ENCODE measurements at regions of chr10 and their contacts with region 1.

Region 1: DNA sequence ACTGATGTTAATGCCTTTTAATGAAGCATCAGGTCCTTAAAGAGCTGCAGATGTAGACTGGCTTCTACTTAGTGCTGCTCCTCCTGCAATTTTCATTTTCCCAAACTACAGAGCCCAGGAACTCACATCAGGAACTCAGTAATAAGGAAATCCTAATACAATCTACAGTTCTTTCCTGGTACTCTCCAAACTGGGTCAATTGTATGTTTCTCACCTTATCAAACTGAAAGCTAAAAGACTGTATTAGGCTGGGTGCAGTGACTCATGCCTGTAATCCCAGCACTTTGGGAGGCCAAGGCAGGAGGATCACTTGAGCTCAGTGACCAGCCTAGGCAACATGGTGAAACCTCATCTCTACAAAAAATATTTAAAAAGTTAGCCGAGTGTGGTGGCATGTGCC is 54.4 kb upstream of the DNAJB12 start:
- DNase-seq: no peak
- ATAC-seq: no peak
- H3K4me3 ChIP-seq: no peak overlapping the region
- H3K27ac ChIP-seq: no peak overlapping the region
- H3K4me1 ChIP-seq: no peaks in the 10 kb centered on the region
- H3K27me3 ChIP-seq: no peaks in the 10 kb centered on the region
- CTCF ChIP-seq: no peak
- POLR2A ChIP-seq: no peak
- RAD21 ChIP-seq: no peak

Region 2: GRCh38 chr10:72107325-72108003 is 301.7 kb before region 1 on chr10:
- CTCF ChIA-PET with region 1: no interaction called
- POLR2A ChIA-PET with region 1: no interaction called
- dilution Hi-C with region 1: no loop called
- in situ Hi-C with region 1: no loop called
- intact Hi-C with region 1: no loop called
- DNase-seq: no peak
- ATAC-seq: peak; percentile 42; the same call in 1 of the 2 replicates
- H3K4me3 ChIP-seq: no peak overlapping the region
- H3K27ac ChIP-seq: no peak overlapping the region
- H3K4me1 ChIP-seq: peaks cover 2% of the 10 kb centered on the region; the same call in 1 of the 2 replicates
- H3K27me3 ChIP-seq: no peaks in the 10 kb centered on the region
- CTCF ChIP-seq: no peak
- POLR2A ChIP-seq: no peak
- RAD21 ChIP-seq: no peak

Region 3: GRCh38 chr10:72386916-72387586 is 22.1 kb before region 1 on chr10:
- CTCF ChIA-PET with region 1: no interaction called
- POLR2A ChIA-PET with region 1: interaction called, 10 read pairs
- dilution Hi-C with region 1: no loop called
- in situ Hi-C with region 1: no loop called
- intact Hi-C with region 1: no loop called
- DNase-seq: no peak
- ATAC-seq: no peak
- H3K4me3 ChIP-seq: no peak overlapping the region
- H3K27ac ChIP-seq: no peak overlapping the region
- H3K4me1 ChIP-seq: no peaks in the 10 kb centered on the region
- H3K27me3 ChIP-seq: no peaks in the 10 kb centered on the region
- CTCF ChIP-seq: no peak
- POLR2A ChIP-seq: no peak
- RAD21 ChIP-seq: no peak

Region 4: DNA sequence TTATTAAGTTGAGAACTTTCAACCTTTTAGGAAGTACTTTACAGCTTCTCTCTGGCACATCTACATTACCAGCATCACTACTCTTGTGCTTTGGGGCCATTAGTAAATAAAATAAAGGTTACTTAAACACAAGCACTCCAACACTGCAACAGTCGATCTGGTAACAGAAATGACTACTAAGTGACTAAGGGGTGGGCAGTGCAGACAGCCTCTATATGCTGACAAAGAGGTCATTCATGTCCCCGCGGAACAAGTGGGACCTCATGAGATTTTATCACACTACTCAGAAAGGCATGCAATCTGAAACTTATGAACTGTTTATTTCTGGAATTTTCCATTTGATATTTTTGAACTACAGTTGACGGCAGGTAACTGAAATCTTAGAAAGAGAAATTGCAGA is 56.9 kb after region 1 on chr10:
- CTCF ChIA-PET with region 1: no interaction called
- POLR2A ChIA-PET with region 1: no interaction called
- dilution Hi-C with region 1: no loop called
- in situ Hi-C with region 1: no loop called
- intact Hi-C with region 1: no loop called
- DNase-seq: peak; percentile 62
- ATAC-seq: peak; percentile 66
- H3K4me3 ChIP-seq: no peak overlapping the region
- H3K27ac ChIP-seq: no peak overlapping the region
- H3K4me1 ChIP-seq: no peaks in the 10 kb centered on the region
- H3K27me3 ChIP-seq: no peaks in the 10 kb centered on the region
- CTCF ChIP-seq: no peak
- POLR2A ChIP-seq: no peak
- RAD21 ChIP-seq: no peak

Measured in IMR-90 (cell line).